ENCODE measurements at regions of chr1 and their contacts with region 1.

Region 1: DNA sequence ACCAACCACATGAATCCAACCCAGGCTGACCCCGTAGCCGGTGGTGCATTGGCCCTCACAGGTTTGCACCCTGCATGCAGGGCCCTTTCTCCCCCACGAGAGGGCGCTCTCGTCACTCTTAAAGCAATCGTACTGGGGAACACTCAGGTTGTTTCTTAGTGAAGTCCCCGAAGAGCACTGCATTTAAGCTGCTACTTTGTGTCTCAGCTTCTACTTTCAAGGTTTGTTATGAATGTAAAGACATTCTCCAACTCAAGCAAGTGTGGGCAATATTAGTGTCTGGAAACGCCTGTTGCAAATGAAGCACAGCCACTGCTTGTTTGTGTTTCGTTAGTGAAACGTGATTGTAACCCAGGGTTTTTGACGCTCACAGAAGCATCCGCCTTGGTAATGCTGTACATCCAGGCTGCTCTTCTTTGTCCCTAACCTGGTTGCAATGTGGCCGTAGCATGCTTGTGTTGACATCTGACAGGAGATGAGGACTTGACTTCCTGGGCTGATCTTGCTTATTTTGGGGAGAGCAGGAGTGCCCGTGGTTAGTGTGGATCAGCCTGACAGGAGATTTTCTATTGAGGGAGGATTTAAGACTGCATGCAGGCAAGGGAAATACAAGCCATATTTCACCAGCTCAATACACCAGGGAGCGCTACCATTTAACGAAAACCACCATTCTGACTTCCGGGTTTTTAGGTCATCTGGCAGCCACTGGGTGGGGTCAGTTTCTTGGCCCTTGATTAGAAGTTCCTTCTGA is 79.8 kb downstream of the ST6GALNAC3 start:
- DNase-seq: peak; percentile 90
- ATAC-seq: peak; percentile 96
- H3K4me3 Mint-ChIP-seq: peak overlapping the region; percentile 69
- H3K27ac Mint-ChIP-seq: peak overlapping the region; percentile 86
- H3K4me1 Mint-ChIP-seq: peaks cover 7% of the 10 kb centered on the region
- H3K27me3 Mint-ChIP-seq: no peaks in the 10 kb centered on the region

Region 2: DNA sequence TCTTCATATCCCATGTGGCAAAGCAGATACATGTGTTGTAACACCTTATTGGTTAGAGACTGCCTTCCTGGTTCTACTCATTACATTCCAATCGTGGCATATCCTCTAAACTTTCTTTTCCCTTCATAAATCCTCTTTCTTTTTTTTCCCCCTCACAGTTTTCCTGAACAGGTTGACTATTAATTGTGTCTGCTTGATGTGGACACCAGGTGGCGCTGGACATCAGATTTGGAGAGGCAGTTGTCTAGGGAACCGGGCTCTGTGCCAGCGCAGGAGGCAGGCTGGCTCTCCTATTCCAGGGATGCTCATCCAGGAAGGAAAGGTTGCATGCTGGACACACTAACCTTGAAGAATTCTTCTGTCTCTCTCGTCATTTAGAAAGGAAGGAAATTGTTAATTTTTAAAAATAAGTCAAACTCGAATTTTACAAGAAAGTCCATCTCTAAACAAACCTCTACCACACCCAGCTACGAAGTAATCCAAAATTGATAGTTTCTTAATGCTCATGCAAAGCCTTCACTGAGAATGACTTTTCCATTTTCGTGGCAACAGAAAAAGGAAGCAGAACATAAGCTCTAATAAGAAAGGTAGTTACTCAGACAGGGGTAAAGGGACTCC is 162.8 kb before region 1 on chr1:
- CTCF ChIA-PET with region 1: interaction called, 3 read pairs
- POLR2A ChIA-PET with region 1: no interaction called
- intact Hi-C with region 1: loop called (anchors 5 to 10 kb)
- DNase-seq: peak; percentile 87
- ATAC-seq: peak; percentile 60
- H3K4me3 Mint-ChIP-seq: no peak overlapping the region
- H3K27ac Mint-ChIP-seq: no peak overlapping the region
- H3K4me1 Mint-ChIP-seq: no peaks in the 10 kb centered on the region
- H3K27me3 Mint-ChIP-seq: no peaks in the 10 kb centered on the region

Region 3: DNA sequence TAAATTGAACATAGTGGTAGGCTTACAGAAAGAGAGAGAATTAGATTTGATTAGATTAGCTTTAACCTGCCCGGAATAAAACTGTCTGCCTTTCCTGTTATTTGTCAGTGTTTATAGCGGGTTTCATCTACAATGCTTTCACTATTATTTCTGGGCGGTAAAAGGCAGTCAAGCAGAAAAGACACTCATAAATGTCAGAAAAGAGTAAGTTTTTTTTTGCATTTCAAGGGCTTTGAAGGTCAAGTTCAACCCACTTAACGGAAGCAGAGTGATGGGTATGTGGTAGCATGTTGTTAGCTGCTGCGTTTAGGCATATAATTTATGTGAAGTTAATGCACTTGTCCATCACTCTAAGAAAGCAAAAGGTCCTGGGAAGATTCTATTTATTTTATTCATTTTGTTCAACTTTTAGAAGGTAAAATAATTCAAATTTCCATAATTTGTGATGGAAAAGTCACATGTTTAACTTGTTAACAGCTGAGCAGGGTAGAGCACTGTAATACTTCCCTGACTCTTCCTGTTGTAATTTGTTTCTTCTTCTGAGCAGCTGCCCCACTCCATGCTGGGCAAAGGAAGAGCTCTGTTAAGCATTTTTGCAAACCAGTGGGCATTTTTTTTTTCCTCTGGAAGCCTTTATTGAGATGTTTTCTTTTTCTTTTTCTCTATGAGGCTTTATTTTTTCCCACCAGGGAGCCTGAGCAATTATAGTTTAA is 140.3 kb after region 1 on chr1:
- CTCF ChIA-PET with region 1: interaction called, 8 read pairs
- POLR2A ChIA-PET with region 1: no interaction called
- intact Hi-C with region 1: loop called in 1 of 2 experiments (anchors 2 kb)
- DNase-seq: no peak
- ATAC-seq: peak; percentile 68
- H3K4me3 Mint-ChIP-seq: peak overlapping the region; percentile 11
- H3K27ac Mint-ChIP-seq: peak overlapping the region; percentile 86
- H3K4me1 Mint-ChIP-seq: peaks cover 66% of the 10 kb centered on the region
- H3K27me3 Mint-ChIP-seq: no peaks in the 10 kb centered on the region

Region 4: GRCh38 chr1:76868154-76868882 is 713.9 kb after region 1 on chr1:
- CTCF ChIA-PET with region 1: no interaction called
- POLR2A ChIA-PET with region 1: no interaction called
- intact Hi-C with region 1: loop called in 1 of 2 experiments (anchors 10 kb)
- DNase-seq: peak; percentile 56
- ATAC-seq: peak; percentile 83
- H3K4me3 Mint-ChIP-seq: peak overlapping the region; percentile 70
- H3K27ac Mint-ChIP-seq: no peak overlapping the region
- H3K4me1 Mint-ChIP-seq: peaks cover 7% of the 10 kb centered on the region
- H3K27me3 Mint-ChIP-seq: peaks cover 51% of the 10 kb centered on the region

Region 5: DNA sequence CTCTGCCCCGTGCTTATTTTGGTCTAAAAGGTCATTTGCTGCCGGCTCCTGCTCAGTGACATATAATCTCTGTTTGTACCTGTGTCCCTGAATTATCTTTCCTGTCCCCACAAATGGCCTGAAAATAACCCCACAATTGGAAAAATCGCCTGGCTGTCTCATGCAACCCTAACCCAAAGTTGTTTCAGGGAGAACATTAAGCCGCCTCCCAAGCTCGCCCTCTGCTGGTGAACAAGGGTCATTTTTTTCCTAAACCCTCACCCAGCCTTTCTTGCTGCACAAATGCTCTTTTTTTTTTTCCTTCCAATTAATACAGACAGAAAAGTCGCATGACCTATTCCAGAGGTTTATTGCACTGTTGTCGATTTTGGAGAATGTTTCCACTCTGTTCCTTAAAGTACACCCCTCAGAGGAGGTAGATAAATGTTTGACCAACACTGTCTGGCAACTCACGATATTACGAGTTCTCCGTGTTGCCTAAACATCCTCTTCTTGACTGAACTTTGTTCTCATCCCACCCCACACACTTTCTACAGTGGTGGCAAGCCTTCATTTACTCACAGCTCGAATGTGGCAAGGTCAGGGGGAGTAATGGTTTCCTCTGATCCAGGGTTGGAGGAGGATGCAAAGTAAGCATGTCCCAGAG is 1379.4 kb after region 1 on chr1:
- CTCF ChIA-PET with region 1: no interaction called
- POLR2A ChIA-PET with region 1: no interaction called
- intact Hi-C with region 1: loop called (anchors 2 to 10 kb)
- DNase-seq: peak; percentile 75
- ATAC-seq: peak; percentile 70
- H3K4me3 Mint-ChIP-seq: no peak overlapping the region
- H3K27ac Mint-ChIP-seq: peak overlapping the region; percentile 69
- H3K4me1 Mint-ChIP-seq: peaks cover 7% of the 10 kb centered on the region
- H3K27me3 Mint-ChIP-seq: no peaks in the 10 kb centered on the region

Measured in activated CD4-positive, alpha-beta T cell treated with anti-CD3 and anti-CD28 coated beads for 36 hours (primary cell).